T-cell (primary cell): ENCODE measurements at regions of chr3 and their contacts with region 1.

Region 1: DNA sequence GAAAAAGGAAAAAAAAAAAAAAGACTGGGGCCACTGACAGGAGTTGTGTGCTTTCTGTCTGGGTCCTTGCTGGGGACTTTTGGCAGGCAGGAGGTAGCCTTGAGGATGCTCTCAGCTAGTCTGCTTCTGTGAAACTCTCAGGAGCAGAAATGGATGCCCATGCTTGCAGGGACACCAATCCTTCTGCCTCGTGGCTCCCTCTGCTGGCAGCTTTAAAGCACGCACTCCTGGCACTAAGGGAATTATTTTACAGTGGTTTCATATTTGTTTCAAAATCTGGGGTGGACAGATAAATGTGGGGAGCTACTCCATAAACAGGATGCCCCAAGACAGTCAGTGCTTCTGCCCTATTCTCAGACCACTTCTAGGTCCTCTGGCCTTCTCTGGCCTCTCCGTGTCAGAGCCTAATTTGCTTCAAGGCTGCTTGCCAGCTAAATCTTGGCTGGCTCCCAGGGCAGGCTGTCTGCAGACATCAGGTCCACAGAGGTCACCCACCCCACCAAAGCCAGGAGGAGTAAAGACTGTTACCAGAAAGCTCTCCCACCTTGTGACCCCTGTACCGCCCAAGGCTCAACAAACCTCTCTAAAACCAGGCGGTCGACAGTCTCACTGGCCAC is 17.1 kb downstream of the TRAIP start:
- DNase-seq: peak; percentile 60 to 92 (median 77)
- ATAC-seq: peak; percentile 90 to 98 (median 94)
- H3K4me3 ChIP-seq: no peak overlapping the region
- H3K4me3 Mint-ChIP-seq: no peak overlapping the region
- H3K27ac ChIP-seq: no peak overlapping the region
- H3K27ac Mint-ChIP-seq: no peak overlapping the region
- H3K4me1 ChIP-seq: no peaks in the 10 kb centered on the region
- H3K4me1 Mint-ChIP-seq: no peaks in the 10 kb centered on the region
- H3K27me3 ChIP-seq: no peaks in the 10 kb centered on the region
- H3K27me3 Mint-ChIP-seq: no peaks in the 10 kb centered on the region

Region 2: DNA sequence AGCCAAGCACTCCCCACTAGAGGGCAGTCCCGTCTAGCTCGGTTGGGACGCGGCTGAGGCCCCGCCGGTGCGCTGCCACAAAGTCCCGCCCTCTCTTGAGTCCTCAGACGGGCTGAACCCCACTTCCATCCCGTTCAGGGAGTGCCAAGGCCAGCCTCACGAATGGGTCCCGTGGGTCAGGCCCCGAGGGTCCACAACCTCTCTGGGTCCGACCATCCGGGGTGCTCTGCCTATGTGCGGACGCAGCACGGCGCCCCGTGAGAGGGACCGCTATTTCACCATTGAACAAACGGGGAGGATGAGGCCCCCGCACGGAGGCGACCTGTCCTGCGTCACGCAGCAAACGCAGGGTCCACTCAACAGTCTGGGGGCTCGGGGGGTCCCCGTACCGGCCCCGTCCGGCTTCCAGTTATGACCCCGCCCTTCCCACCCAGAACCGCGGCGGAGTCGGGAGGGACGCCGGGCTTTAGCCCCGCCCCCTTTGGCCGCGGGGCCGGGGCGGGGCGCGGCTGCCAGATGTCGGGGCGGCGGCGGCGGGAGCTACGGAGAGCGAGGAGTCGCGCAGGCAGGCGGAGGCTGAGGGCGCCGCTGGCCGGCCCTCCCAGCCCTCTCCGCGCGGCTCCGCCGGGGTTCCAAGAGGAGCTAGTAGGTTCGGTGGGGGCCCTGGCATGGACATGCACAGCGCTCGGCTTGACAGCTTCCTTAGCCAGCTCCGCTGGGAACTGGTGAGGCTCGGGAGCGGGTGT is 36.4 kb before region 1 on chr3 and contains the start of gene INKA1:
- CTCF ChIA-PET with region 1: interaction called, 21 to 56 read pairs
- POLR2A ChIA-PET with region 1: interaction called, 5 to 8 read pairs
- DNase-seq: peak; percentile 73 to 94 (median 85)
- ATAC-seq: peak; percentile 83 to 85 (median 84)
- H3K4me3 ChIP-seq: peak within 1 kb of the TSS; percentile 79 to 98
- H3K4me3 Mint-ChIP-seq: peak within 1 kb of the TSS; percentile 86 to 89 (median 87)
- H3K27ac ChIP-seq: peak within 1 kb of the TSS; percentile 84
- H3K27ac Mint-ChIP-seq: peak within 1 kb of the TSS; percentile 85 to 93
- H3K4me1 ChIP-seq: peaks cover 25 to 54% of the 10 kb centered on the region in 2 experiments
- H3K4me1 Mint-ChIP-seq: peaks cover 40 to 44% (median 44%) of the 10 kb centered on the region in 3 donors
- H3K27me3 ChIP-seq: peaks cover 0 to 8% of the 10 kb centered on the region in 2 experiments
- H3K27me3 Mint-ChIP-seq: peaks cover 0 to 8% of the 10 kb centered on the region in 2 donors
- total RNA-seq, gene INKA1: 0.73 to 2.7 (median 1.8) TPM

Region 3: GRCh38 chr3:49826016-49826415 is 13.3 kb before region 1 on chr3:
- CTCF ChIA-PET with region 1: interaction called in 1 of 2 experiments, 13 read pairs
- POLR2A ChIA-PET with region 1: no interaction called
- DNase-seq: no peak
- ATAC-seq: no peak
- H3K4me3 ChIP-seq: no peak overlapping the region
- H3K4me3 Mint-ChIP-seq: no peak overlapping the region
- H3K27ac ChIP-seq: no peak overlapping the region
- H3K27ac Mint-ChIP-seq: no peak overlapping the region
- H3K4me1 ChIP-seq: no peaks in the 10 kb centered on the region
- H3K4me1 Mint-ChIP-seq: no peaks in the 10 kb centered on the region
- H3K27me3 ChIP-seq: no peaks in the 10 kb centered on the region
- H3K27me3 Mint-ChIP-seq: no peaks in the 10 kb centered on the region

Region 4: DNA sequence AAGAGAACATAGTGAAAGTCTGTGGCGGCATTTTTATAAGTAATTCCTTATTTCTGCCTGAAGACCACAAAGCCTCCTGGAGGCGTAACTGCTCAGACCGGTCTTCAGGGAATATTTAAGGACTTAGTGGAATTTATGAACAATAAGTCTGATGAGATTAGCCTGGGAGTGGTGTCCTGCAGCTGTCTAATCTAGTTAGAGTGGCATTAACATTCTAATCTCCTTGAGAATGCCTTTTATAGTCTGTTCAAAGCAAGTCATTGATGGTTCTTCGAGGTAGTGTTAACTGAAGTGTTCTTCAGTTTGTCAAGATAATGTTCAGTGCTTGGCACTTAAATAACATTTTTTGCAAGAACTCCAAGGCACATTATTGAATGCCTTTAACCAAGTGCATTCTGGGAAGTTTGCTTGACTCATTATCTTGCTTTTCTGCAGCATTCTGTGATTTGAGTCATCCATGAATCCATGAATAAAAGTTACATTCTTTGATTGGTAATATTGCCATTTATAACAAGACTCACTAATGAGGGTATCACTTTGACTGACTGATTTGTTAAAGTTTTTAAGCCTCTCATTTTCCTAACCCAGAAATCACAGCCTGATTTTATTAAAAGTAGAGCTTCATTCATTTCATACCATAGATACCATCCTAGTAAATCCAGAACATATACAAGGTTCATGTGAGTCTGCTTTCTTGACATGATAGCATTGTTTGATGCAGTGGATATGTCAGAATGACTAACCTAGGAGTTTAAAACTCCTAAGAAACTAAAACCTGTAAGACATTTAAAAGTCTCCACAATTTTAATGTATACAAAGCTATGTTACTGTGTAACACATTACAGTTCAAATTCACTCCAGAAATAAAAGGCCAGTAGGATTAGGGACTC is 261.9 kb after region 1 on chr3:
- CTCF ChIA-PET with region 1: no interaction called
- POLR2A ChIA-PET with region 1: no interaction called
- DNase-seq: no peak
- ATAC-seq: no peak
- H3K4me3 ChIP-seq: no peak overlapping the region
- H3K4me3 Mint-ChIP-seq: no peak overlapping the region
- H3K27ac ChIP-seq: no peak overlapping the region
- H3K27ac Mint-ChIP-seq: peak overlapping the region in 1 of 2 donors; percentile 28
- H3K4me1 ChIP-seq: no peaks in the 10 kb centered on the region
- H3K4me1 Mint-ChIP-seq: peaks cover under 1 to 11% (median 11%) of the 10 kb centered on the region in 3 donors
- H3K27me3 ChIP-seq: no peaks in the 10 kb centered on the region
- H3K27me3 Mint-ChIP-seq: no peaks in the 10 kb centered on the region